MCF 10A (cell line): ENCODE measurements at regions of chr16 and their contacts with region 1.

Region 1: GRCh38 chr16:75305364-75306098 is 54.1 kb upstream of the BCAR1 start:
- DNase-seq: peak; percentile 100
- H3K4me3 Mint-ChIP-seq: peak overlapping the region; percentile 65
- H3K27ac Mint-ChIP-seq: peak overlapping the region; percentile 99
- H3K4me1 Mint-ChIP-seq: peaks cover 45% of the 10 kb centered on the region
- H3K27me3 Mint-ChIP-seq: no peaks in the 10 kb centered on the region
- CTCF ChIP-seq: no peak

Region 2: GRCh38 chr16:75234856-75235696 is 70.5 kb before region 1 on chr16:
- CTCF ChIA-PET with region 1: interaction called, 46 read pairs
- POLR2A ChIA-PET with region 1: interaction called, 30 read pairs
- intact Hi-C with region 1: no loop called
- DNase-seq: no peak
- H3K4me3 Mint-ChIP-seq: no peak overlapping the region
- H3K27ac Mint-ChIP-seq: no peak overlapping the region
- H3K4me1 Mint-ChIP-seq: peaks cover 11% of the 10 kb centered on the region
- H3K27me3 Mint-ChIP-seq: no peaks in the 10 kb centered on the region
- CTCF ChIP-seq: no peak

Region 3: GRCh38 chr16:75265845-75266701 is 39.5 kb before region 1 on chr16:
- CTCF ChIA-PET with region 1: interaction called, 7 read pairs
- POLR2A ChIA-PET with region 1: interaction called, 89 read pairs
- intact Hi-C with region 1: loop called (anchors 1 kb)
- DNase-seq: peak; percentile 65
- H3K4me3 Mint-ChIP-seq: peak overlapping the region; percentile 79
- H3K27ac Mint-ChIP-seq: peak overlapping the region; percentile 73
- H3K4me1 Mint-ChIP-seq: peaks cover 17% of the 10 kb centered on the region
- H3K27me3 Mint-ChIP-seq: no peaks in the 10 kb centered on the region
- CTCF ChIP-seq: no peak

Region 4: GRCh38 chr16:75293772-75294171 is 11.8 kb before region 1 on chr16:
- CTCF ChIA-PET with region 1: interaction called, 4 read pairs
- POLR2A ChIA-PET with region 1: interaction called, 30 read pairs
- intact Hi-C with region 1: no loop called
- DNase-seq: no peak
- H3K4me3 Mint-ChIP-seq: no peak overlapping the region
- H3K27ac Mint-ChIP-seq: no peak overlapping the region
- H3K4me1 Mint-ChIP-seq: peaks cover 5% of the 10 kb centered on the region
- H3K27me3 Mint-ChIP-seq: no peaks in the 10 kb centered on the region
- CTCF ChIP-seq: no peak

Region 5: DNA sequence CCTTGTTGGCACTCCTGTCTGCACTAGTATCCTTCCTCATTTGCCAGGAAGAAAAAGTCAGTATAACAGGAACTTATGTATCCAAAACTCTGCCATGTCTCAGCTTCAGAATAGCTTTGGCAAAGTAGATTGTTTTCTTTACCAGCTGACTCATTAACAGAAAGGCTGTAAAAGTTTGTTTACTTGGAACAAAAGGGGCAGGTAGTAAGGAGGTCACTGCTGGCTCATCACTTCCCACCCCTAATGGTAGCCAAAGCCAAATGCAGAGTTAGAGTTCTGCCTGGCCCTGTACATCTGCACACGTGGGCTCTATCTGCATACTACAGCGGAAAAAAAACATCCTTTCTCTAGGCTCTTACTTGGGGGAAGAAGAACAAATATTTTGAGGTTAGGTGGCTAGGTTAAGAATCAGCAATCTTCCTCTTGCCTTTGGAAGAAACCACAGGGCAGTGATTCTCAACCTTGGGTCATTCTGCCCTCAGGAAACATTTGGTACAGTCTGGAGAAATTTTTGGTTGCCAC is 36.8 kb after region 1 on chr16:
- CTCF ChIA-PET with region 1: interaction called, 8 read pairs
- POLR2A ChIA-PET with region 1: interaction called, 65 read pairs
- intact Hi-C with region 1: loop called (anchors 1 kb)
- DNase-seq: peak; percentile 87
- H3K4me3 Mint-ChIP-seq: no peak overlapping the region
- H3K27ac Mint-ChIP-seq: peak overlapping the region; percentile 85
- H3K4me1 Mint-ChIP-seq: peaks cover 30% of the 10 kb centered on the region
- H3K27me3 Mint-ChIP-seq: no peaks in the 10 kb centered on the region
- CTCF ChIP-seq: no peak

Region 6: DNA sequence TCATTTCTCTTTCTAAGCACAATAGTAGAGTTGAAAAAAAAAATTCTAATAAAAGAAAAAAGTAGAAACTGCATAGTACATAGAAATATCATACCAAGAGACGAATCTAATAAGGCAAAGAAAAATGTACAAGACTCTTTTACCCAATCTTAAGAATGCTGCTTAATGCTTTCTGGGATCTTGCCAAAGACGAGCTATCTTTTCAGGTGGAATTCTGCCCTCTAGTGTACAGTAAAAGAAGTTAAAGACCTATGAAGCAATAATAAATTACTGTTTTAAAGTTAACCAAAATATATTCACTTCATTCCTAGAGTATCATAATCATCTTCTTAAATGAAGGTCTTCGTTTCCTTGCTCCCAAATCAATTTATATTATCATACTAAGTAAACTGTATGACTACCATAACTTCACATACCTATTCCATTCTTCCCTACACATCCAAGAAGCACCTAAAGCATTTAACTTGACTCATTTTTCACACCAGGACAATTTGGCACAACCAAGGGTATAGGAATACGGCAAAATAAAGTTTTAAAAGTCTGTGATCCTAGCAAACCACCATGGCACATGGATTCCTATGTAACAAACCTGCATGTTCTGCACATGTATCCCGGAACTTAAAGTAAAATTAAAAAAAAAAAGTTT is 80.1 kb after region 1 on chr16:
- CTCF ChIA-PET with region 1: interaction called, 11 read pairs
- POLR2A ChIA-PET with region 1: interaction called, 33 read pairs
- intact Hi-C with region 1: loop called (anchors 1 kb)
- DNase-seq: peak; percentile 85
- H3K4me3 Mint-ChIP-seq: no peak overlapping the region
- H3K27ac Mint-ChIP-seq: no peak overlapping the region
- H3K4me1 Mint-ChIP-seq: peaks cover 12% of the 10 kb centered on the region
- H3K27me3 Mint-ChIP-seq: no peaks in the 10 kb centered on the region
- CTCF ChIP-seq: peak; percentile 66

Region 7: DNA sequence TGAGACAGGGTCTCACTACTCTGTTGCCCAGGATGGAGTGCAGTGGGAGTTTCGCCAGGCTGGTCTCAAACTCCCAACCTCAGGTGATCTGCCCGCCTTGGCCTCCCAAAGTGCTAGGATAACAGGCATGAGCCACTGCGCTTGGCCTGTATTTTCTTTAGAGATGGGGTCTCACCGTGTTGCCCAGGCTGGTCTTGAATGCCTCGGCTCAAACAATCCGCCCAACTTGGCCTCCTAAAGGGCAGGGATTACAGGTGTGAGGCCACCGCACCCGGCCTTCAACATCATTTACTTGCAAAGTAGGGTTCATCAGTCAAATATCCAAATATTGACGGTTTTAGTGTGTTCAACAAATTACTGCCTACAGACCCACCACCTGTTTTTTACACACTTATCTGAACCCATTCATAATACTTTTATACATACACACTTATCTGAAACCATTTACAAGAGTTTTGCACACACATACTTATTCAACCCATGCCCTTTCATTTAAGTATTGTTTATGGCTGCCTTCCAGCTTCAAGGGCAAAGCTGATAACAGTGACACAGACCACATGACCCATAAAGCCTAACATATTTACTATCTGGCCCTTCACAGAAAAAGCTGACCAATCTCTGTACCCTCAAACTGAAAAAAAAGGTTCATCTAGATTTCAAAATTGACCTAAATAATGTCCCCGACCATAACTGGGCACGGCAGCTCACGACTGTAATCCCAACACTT is 147.1 kb after region 1 on chr16:
- CTCF ChIA-PET with region 1: no interaction called
- POLR2A ChIA-PET with region 1: no interaction called
- intact Hi-C with region 1: no loop called
- DNase-seq: no peak
- H3K4me3 Mint-ChIP-seq: no peak overlapping the region
- H3K27ac Mint-ChIP-seq: no peak overlapping the region
- H3K4me1 Mint-ChIP-seq: peaks cover 4% of the 10 kb centered on the region
- H3K27me3 Mint-ChIP-seq: no peaks in the 10 kb centered on the region
- CTCF ChIP-seq: no peak